ENCODE measurements at regions of chr17 and their contacts with region 1.

Region 1: GRCh38 chr17:58006924-58007780 is at the start of gene SRSF1:
- DNase-seq: peak; percentile 95 to 100 (median 97)
- ATAC-seq: peak; percentile 86
- H3K4me3 ChIP-seq: peak within 1 kb of the TSS; percentile 83
- H3K4me3 Mint-ChIP-seq: peak within 1 kb of the TSS; percentile 98
- H3K27ac ChIP-seq: peak within 1 kb of the TSS; percentile 93 to 97
- H3K27ac Mint-ChIP-seq: peak within 1 kb of the TSS; percentile 99
- H3K4me1 ChIP-seq: peaks cover 29% of the 10 kb centered on the region
- H3K4me1 Mint-ChIP-seq: peaks cover 57% of the 10 kb centered on the region
- H3K27me3 ChIP-seq: no peaks in the 10 kb centered on the region
- H3K27me3 Mint-ChIP-seq: no peaks in the 10 kb centered on the region
- CTCF ChIP-seq: no peak
- total RNA-seq, gene SRSF1: 115 to 121 TPM

Region 2: GRCh38 chr17:56833809-56834379 is 1173.3 kb before region 1 on chr17 and contains the starts of genes C17orf67 and DGKE:
- CTCF ChIA-PET with region 1: no interaction called
- POLR2A ChIA-PET with region 1: interaction called, 4 read pairs
- intact Hi-C with region 1: loop called in 1 of 2 experiments (anchors 10 kb)
- DNase-seq: peak; percentile 97 to 100 (median 99)
- ATAC-seq: peak; percentile 87
- H3K4me3 ChIP-seq: peak within 1 kb of the TSS; percentile 96
- H3K4me3 Mint-ChIP-seq: peak within 1 kb of the TSS; percentile 99
- H3K27ac ChIP-seq: peak within 1 kb of the TSS; percentile 58 to 83
- H3K27ac Mint-ChIP-seq: peak within 1 kb of the TSS; percentile 95
- H3K4me1 ChIP-seq: peaks cover 41% of the 10 kb centered on the region
- H3K4me1 Mint-ChIP-seq: peaks cover 67% of the 10 kb centered on the region
- H3K27me3 ChIP-seq: no peaks in the 10 kb centered on the region
- H3K27me3 Mint-ChIP-seq: no peaks in the 10 kb centered on the region
- CTCF ChIP-seq: no peak
- total RNA-seq, gene C17orf67: 4.3 to 4.8 TPM
- total RNA-seq, gene DGKE: 20.0 to 22.3 TPM

Region 3: DNA sequence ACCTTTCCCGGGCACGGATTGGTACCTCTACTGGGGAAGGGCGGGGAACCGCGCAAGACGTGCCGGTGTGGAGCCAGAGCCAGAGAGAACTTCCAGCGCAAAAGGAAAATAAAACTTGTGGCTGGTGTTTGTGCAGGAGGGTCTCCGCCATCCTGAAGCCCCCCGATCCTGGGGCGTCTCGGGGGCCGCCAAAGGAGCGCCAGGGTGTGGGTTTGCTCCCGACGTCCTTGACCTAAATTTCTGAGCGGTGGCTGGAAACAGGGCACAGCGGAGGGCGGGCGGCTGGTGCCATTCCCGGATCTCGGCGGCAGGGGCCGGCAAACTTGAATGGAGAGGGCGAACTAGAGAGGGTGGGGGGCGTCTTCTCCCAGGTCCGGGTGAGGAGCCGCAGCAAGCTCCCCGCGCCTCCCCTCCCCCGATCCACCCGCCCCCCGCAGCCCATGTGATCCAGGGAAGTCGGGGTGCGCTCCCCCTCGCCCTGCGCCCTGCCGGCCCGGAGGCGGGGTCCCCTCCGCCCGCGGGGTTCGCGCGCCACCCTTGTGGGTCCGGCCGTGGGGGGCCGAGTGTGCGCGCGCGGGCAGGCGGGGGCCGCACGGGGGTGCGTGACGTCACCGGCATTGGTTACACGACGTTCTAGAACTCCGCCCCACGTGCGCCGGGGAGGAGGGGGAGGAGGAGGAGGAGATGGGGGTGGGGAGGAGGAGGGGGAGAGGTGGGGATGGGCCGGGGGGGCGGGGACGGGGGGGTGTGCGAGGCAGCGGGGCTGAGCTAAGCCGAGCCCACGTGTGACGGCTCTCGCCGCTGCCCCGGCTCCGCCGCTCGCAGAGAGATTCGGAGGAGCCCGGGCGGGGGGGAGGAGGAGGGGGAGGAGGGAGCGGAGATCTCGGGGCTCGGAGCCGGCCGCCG is 751.1 kb before region 1 on chr17 and contains the start of gene MSI2:
- CTCF ChIA-PET with region 1: no interaction called
- POLR2A ChIA-PET with region 1: no interaction called
- intact Hi-C with region 1: loop called in 1 of 2 experiments (anchors 10 kb)
- DNase-seq: peak; percentile 82 to 96 (median 90)
- ATAC-seq: peak; percentile 71
- H3K4me3 ChIP-seq: peak within 1 kb of the TSS; percentile 74
- H3K4me3 Mint-ChIP-seq: peak within 1 kb of the TSS; percentile 99
- H3K27ac ChIP-seq: peak within 1 kb of the TSS; percentile 72 to 82
- H3K27ac Mint-ChIP-seq: peak within 1 kb of the TSS; percentile 98
- H3K4me1 ChIP-seq: peaks cover 35% of the 10 kb centered on the region
- H3K4me1 Mint-ChIP-seq: peaks cover 48% of the 10 kb centered on the region
- H3K27me3 ChIP-seq: no peaks in the 10 kb centered on the region
- H3K27me3 Mint-ChIP-seq: no peaks in the 10 kb centered on the region
- CTCF ChIP-seq: no peak
- total RNA-seq, gene MSI2: 129 to 132 TPM

Region 4: DNA sequence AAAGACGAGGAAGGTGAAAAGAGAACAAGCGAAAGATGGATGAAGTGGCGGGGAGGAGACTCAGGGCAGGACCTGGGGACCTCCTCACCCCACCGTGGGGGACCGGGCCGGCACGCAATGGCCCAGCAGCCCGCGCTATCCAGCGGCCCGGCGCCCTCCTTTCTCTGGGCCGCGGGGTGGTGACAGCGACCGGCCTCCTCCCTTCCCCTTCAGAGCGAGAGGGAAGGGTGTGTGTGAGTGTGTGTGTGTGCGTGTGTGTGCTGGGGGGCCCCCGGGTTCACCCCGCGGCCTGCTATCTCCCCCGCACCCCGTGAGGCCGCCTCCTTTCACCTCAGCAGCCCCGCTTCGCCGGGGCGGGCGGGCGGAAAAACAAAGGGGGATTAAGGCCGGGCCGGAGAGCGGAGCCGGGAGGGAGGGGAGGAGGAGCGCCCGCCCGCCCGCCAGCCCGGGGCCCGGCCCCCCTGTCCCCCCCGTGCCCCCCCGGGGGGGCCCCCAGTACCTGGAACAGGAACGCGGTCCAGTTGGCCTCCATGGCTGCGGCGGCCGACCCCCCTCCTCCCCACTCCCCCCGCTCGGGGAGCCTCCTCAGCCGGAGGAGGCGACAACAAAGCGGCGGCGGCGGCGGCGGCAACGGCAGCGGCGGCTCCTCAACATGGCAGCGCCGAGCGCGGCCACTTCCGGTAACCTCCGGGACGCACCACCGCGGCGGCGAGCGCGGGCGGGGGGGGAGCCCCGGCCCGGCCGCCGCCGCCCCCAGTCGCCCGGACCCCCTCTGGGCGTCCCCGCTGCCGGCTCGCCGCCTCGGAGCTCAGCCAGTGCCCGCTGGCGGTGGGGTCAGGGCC is 19.4 kb before region 1 on chr17 and contains the start of gene VEZF1:
- CTCF ChIA-PET with region 1: interaction called, 4 read pairs
- POLR2A ChIA-PET with region 1: interaction called, 94 read pairs
- intact Hi-C with region 1: loop called (anchors 2 kb)
- DNase-seq: peak; percentile 67 to 90 (median 78)
- ATAC-seq: peak; percentile 75
- H3K4me3 ChIP-seq: peak within 1 kb of the TSS; percentile 86
- H3K4me3 Mint-ChIP-seq: peak within 1 kb of the TSS; percentile 97
- H3K27ac ChIP-seq: peak within 1 kb of the TSS; percentile 50 to 74
- H3K27ac Mint-ChIP-seq: peak within 1 kb of the TSS; percentile 97
- H3K4me1 ChIP-seq: peaks cover 24% of the 10 kb centered on the region
- H3K4me1 Mint-ChIP-seq: peaks cover 70% of the 10 kb centered on the region
- H3K27me3 ChIP-seq: no peaks in the 10 kb centered on the region
- H3K27me3 Mint-ChIP-seq: no peaks in the 10 kb centered on the region
- CTCF ChIP-seq: no peak
- total RNA-seq, gene VEZF1: 41.6 to 41.7 TPM

Region 5: DNA sequence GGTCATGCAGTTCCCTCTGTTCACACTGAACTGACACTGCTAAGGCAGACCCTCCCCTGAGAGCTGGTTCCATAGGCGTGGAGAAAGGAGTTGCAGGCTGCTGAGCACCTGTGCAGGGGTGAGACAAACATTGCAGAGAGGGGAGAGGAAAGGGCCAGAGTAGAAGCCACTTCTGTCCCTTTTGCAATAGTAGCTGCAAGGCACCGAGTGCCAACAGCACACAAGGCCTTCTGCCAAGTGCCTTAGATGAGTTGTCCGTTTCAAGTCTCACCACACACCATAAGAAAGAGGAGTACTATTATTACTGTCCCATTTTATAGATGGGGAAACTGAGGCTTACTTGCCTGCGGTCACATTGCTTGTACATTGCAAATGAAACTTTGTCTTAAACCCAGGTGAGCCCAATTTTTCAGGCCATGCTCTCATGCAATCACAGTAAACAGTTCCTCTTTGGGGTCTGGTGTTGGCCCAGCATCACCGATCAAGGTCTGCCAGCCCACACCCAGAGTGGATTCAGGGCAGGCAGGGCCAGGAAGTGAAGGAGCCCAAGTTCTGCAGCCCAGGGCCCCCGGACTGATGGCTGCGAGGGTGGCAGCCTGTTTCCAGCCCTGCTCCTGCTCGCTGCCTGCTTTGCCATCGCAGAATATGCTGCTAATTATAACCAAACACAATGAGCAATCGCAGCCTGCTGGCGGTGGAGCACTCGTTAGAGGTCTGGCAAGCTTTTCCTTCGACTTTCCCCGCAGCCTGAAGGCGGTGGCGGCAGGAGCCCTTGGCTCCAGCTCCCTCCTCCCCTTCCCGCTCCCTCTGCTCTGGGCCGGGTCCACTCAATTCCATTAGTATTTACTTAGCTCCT is 39.3 kb after region 1 on chr17:
- CTCF ChIA-PET with region 1: no interaction called
- POLR2A ChIA-PET with region 1: no interaction called
- intact Hi-C with region 1: no loop called
- DNase-seq: no peak
- ATAC-seq: no peak
- H3K4me3 ChIP-seq: no peak overlapping the region
- H3K4me3 Mint-ChIP-seq: no peak overlapping the region
- H3K27ac ChIP-seq: no peak overlapping the region
- H3K27ac Mint-ChIP-seq: no peak overlapping the region
- H3K4me1 ChIP-seq: no peaks in the 10 kb centered on the region
- H3K4me1 Mint-ChIP-seq: no peaks in the 10 kb centered on the region
- H3K27me3 ChIP-seq: peaks cover 0 to 10% of the 10 kb centered on the region in 2 experiments
- H3K27me3 Mint-ChIP-seq: peaks cover 41% of the 10 kb centered on the region
- CTCF ChIP-seq: no peak

Region 6: GRCh38 chr17:58082870-58083490 is 75.8 kb after region 1 on chr17 and contains the start of gene DYNLL2:
- CTCF ChIA-PET with region 1: interaction called, 5 read pairs
- POLR2A ChIA-PET with region 1: interaction called, 62 read pairs
- intact Hi-C with region 1: loop called (anchors 1 kb)
- DNase-seq: peak; percentile 81 to 94 (median 90)
- ATAC-seq: peak; percentile 78
- H3K4me3 ChIP-seq: peak within 1 kb of the TSS; percentile 71
- H3K4me3 Mint-ChIP-seq: peak within 1 kb of the TSS; percentile 91
- H3K27ac ChIP-seq: peak within 1 kb of the TSS; percentile 63 to 69
- H3K27ac Mint-ChIP-seq: peak within 1 kb of the TSS; percentile 89
- H3K4me1 ChIP-seq: peaks cover 38% of the 10 kb centered on the region
- H3K4me1 Mint-ChIP-seq: peaks cover 36% of the 10 kb centered on the region
- H3K27me3 ChIP-seq: no peaks in the 10 kb centered on the region
- H3K27me3 Mint-ChIP-seq: no peaks in the 10 kb centered on the region
- CTCF ChIP-seq: no peak
- total RNA-seq, gene DYNLL2: 30.9 to 32.2 TPM

Region 7: DNA sequence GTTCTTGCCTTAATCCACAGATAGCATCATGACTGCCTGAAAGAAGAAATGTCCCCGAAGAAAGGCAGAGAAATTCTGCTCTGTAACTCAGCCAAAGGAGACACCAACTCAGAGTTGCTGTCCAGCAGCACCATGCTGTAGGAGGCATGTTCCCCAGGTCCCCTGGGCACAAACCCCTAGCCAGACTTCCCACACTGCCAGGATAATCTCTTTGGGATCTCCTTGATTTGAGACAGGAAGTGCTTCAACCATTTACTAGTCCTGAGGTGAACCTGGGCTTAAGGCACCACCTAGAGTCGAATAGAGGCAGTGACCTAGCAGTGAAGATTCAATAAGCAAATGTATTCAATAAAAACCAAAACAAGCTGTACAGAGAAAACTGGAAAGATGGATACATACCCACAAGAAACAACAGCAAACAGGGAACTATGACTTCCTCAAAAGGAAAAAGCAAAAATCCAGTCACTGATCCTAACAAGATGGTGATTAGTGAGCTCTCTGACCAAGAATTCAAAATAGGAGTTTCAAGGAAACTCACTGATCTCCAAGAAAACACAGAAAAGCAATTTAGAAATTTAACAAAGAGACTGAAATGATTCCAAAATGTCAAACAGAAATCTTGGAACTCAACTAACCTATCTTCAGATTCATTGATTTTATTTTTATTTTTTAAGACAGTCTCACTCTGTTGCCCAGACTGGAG is 165.4 kb after region 1 on chr17:
- CTCF ChIA-PET with region 1: interaction called, 3 read pairs
- POLR2A ChIA-PET with region 1: interaction called, 10 read pairs
- intact Hi-C with region 1: no loop called
- DNase-seq: peak in 13 of 14 experiments; percentile 16 to 81 (median 31)
- ATAC-seq: peak; percentile 90
- H3K4me3 ChIP-seq: peak overlapping the region; percentile 4
- H3K4me3 Mint-ChIP-seq: no peak overlapping the region
- H3K27ac ChIP-seq: peak overlapping the region in 1 of 2 donors; percentile 57
- H3K27ac Mint-ChIP-seq: peak overlapping the region; percentile 31
- H3K4me1 ChIP-seq: peaks cover 43% of the 10 kb centered on the region
- H3K4me1 Mint-ChIP-seq: peaks cover 47% of the 10 kb centered on the region
- H3K27me3 ChIP-seq: no peaks in the 10 kb centered on the region
- H3K27me3 Mint-ChIP-seq: peaks cover 3% of the 10 kb centered on the region
- CTCF ChIP-seq: peak; percentile 87

Region 8: DNA sequence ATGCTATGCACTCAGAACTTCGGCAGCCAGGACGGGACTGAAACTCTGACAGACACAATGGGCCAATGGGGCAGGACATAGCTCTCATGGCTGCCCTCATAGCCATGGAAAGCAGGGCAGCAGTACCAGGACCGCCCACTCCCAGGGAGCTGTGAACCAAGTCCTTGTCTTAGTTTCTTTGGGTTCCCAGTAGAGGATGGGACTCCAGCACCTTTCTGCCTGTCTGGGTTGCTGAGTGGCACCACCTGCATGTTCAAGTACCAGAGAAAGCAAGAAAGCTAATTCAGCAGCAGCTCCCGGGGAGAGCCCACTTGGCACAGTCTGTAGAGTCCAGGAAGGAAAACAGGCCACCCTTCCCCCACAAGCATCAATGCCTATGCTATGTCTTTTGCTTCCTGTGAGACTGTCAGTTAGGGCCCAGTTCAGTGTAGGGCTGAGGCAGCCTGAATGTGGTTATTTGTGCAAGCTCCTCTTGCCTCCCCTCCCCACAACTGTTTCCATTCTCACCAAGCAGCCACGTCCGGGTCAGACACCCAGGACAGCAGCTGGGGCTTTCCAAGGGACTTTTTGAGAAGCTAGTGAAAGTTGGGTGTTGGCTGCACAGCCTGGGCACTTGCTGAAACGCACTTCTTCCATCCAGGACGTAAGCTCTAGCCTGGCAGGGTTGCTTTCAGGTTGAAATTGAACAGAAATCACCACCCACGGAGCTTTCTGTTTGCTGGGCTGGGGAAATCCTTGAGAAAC is 337.1 kb after region 1 on chr17:
- CTCF ChIA-PET with region 1: no interaction called
- POLR2A ChIA-PET with region 1: interaction called, 9 read pairs
- intact Hi-C with region 1: loop called in 1 of 2 experiments (anchors 5 kb)
- DNase-seq: peak in 13 of 14 experiments; percentile 56 to 97 (median 77)
- ATAC-seq: peak; percentile 71
- H3K4me3 ChIP-seq: peak overlapping the region; percentile 67
- H3K4me3 Mint-ChIP-seq: peak overlapping the region; percentile 84
- H3K27ac ChIP-seq: peak overlapping the region; percentile 97 to 98
- H3K27ac Mint-ChIP-seq: peak overlapping the region; percentile 84
- H3K4me1 ChIP-seq: peaks cover 86% of the 10 kb centered on the region
- H3K4me1 Mint-ChIP-seq: peaks cover 99% of the 10 kb centered on the region
- H3K27me3 ChIP-seq: no peaks in the 10 kb centered on the region
- H3K27me3 Mint-ChIP-seq: no peaks in the 10 kb centered on the region
- CTCF ChIP-seq: no peak